Breast epithelium (tissue), 4 donors: ENCODE measurements at regions of chr20 and their contacts with region 1.

Region 1: DNA sequence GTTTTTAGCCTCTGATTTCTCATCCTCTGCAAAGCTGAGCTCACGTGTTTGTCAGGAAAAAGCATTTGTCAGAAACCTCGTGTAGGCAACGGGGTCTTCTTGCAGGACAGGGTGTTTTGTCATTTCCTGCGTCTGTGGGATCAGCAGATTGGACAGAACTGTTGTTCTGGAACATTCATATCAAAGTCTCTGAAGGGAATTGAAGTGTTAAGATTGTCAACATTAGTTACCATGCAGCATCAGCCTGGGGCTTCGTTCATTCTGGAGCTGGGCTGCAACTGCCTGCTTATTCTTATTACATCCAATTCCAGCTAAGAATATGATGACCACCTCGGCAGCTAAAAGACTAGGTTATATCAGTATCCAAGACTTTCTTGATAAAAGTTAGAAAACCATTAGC is 71.0 kb upstream of the RALGAPA2 start:
- DNase-seq: no peak
- H3K4me3 ChIP-seq: no peak overlapping the region
- H3K27ac ChIP-seq: peak overlapping the region in 1 of 2 donors; percentile 3
- H3K4me1 ChIP-seq: peaks cover 4 to 5% of the 10 kb centered on the region in 2 donors
- H3K27me3 ChIP-seq: no peaks in the 10 kb centered on the region
- CTCF ChIP-seq: no peak
- POLR2A ChIP-seq: no peak

Region 2: GRCh38 chr20:20743511-20744169 is 39.8 kb before region 1 on chr20:
- intact Hi-C with region 1: loop called (anchors 1 kb)
- DNase-seq: peak in 1 of 2 donors; percentile 21
- H3K4me3 ChIP-seq: peak overlapping the region in 1 of 3 donors; percentile 43
- H3K27ac ChIP-seq: peak overlapping the region; percentile 70 to 86
- H3K4me1 ChIP-seq: no peaks in the 10 kb centered on the region
- H3K27me3 ChIP-seq: no peaks in the 10 kb centered on the region
- CTCF ChIP-seq: no peak
- POLR2A ChIP-seq: no peak